Heart right ventricle (tissue), 16 donors: ENCODE measurements at regions of chr6 and their contacts with region 1.

Region 1: GRCh38 chr6:117498159-117498558 is 15.7 kb downstream of the DCBLD1 start:
- DNase-seq: no peak
- ATAC-seq: peak in 4 of 8 donors; percentile 39 to 62 (median 54)
- H3K4me3 ChIP-seq: no peak overlapping the region
- H3K27ac ChIP-seq: peak overlapping the region in 7 of 10 donors; percentile 0 to 74 (median 63)
- H3K4me1 ChIP-seq: peaks cover 0 to 58% (median 45%) of the 10 kb centered on the region in 9 donors
- H3K27me3 ChIP-seq: no peaks in the 10 kb centered on the region
- CTCF ChIP-seq: no peak

Region 2: GRCh38 chr6:117525607-117526006 is 27.4 kb after region 1 on chr6:
- intact Hi-C with region 1: loop called in 3 of 10 experiments (anchors 5 kb)
- DNase-seq: no peak
- ATAC-seq: no peak
- H3K4me3 ChIP-seq: no peak overlapping the region
- H3K27ac ChIP-seq: no peak overlapping the region
- H3K4me1 ChIP-seq: peaks cover 0 to 5% (median 0%) of the 10 kb centered on the region in 9 donors
- H3K27me3 ChIP-seq: no peaks in the 10 kb centered on the region
- CTCF ChIP-seq: no peak

Region 3: DNA sequence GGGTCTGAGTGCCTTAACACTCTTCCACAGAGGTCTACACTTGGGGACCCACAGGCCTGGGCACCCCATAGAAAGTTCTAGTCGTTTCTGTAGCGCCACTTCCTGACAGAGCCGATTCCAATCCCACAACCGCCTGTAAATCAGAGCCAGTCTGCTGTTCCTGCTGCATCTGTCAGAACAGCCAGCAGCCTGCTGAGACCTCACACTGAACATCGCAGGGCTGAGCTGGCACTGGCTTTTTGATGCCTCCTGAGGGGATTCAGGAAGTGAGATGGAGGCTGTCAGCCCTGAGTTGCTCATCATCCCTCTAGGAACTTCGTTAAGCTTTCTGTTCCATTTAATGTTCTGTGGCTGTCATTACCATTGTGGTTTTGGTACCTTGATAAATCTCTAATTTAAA is 33.2 kb after region 1 on chr6:
- intact Hi-C with region 1: loop called in 3 of 10 experiments (anchors 5 kb)
- DNase-seq: no peak
- ATAC-seq: peak in 1 of 8 donors; percentile 48
- H3K4me3 ChIP-seq: no peak overlapping the region
- H3K27ac ChIP-seq: peak overlapping the region in 5 of 10 donors; percentile 4 to 49 (median 37)
- H3K4me1 ChIP-seq: peaks cover 0 to 22% (median 9%) of the 10 kb centered on the region in 9 donors
- H3K27me3 ChIP-seq: no peaks in the 10 kb centered on the region
- CTCF ChIP-seq: no peak

Region 4: GRCh38 chr6:117591405-117591804 is 93.2 kb after region 1 on chr6:
- intact Hi-C with region 1: no loop called
- DNase-seq: no peak
- ATAC-seq: peak in 3 of 8 donors; percentile 49 to 79 (median 52)
- H3K4me3 ChIP-seq: no peak overlapping the region
- H3K27ac ChIP-seq: peak overlapping the region in 3 of 10 donors; percentile 11 to 63 (median 23)
- H3K4me1 ChIP-seq: peaks cover 3 to 43% (median 22%) of the 10 kb centered on the region in 9 donors
- H3K27me3 ChIP-seq: no peaks in the 10 kb centered on the region
- CTCF ChIP-seq: no peak